ENCODE measurements at regions of chr2 and their contacts with region 1.

Region 1: DNA sequence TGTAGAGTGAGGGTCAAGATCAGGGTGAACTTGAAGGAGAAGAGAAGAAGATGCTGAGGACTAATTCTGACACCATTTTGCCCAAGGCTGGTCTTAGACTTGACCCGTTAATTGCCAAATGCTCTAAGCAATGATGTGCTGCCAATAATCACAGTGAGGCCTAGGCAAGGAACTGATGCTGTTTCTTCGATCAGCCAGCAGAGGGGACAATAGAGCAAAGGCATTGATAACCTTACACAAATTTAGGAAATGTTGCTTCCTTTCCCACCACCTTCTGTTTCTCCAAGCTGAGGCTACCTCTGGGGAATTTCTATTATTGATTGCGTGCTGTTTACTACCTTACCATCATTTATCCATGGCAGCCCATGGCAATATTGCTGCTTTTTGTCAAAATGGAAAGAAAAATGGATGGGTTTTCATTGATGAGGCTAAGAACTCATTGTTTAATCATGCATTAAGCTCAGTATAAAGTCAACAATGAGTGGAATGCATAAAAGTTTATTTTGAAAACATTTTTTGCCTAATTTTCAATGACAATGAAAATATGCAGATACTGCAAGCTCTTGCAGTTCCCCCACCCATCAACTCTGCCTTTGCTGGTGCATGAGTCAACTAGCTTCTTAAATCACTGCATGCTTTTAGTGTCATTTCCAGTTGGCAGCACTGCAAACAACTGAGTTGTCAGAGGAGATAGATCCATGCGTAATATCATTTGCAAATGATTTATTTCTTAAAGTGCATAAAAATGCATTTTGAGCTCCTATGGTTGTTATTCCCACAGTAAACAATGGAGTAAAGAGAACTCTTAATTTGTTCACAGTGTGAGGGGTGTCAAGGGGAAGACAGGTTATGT is 116.4 kb upstream of the NYAP2 start:
- DNase-seq: peak; percentile 28
- ATAC-seq: peak; percentile 68
- H3K4me3 Mint-ChIP-seq: no peak overlapping the region
- H3K27ac Mint-ChIP-seq: no peak overlapping the region
- H3K4me1 Mint-ChIP-seq: no peaks in the 10 kb centered on the region
- H3K27me3 Mint-ChIP-seq: no peaks in the 10 kb centered on the region
- CTCF ChIP-seq: peak; percentile 72

Region 2: GRCh38 chr2:225254363-225254762 is 28.7 kb before region 1 on chr2:
- CTCF ChIA-PET with region 1: interaction called, 11 read pairs
- POLR2A ChIA-PET with region 1: no interaction called
- intact Hi-C with region 1: no loop called
- DNase-seq: no peak
- ATAC-seq: no peak
- H3K4me3 Mint-ChIP-seq: no peak overlapping the region
- H3K27ac Mint-ChIP-seq: no peak overlapping the region
- H3K4me1 Mint-ChIP-seq: no peaks in the 10 kb centered on the region
- H3K27me3 Mint-ChIP-seq: peaks cover 3% of the 10 kb centered on the region
- CTCF ChIP-seq: no peak

Region 3: DNA sequence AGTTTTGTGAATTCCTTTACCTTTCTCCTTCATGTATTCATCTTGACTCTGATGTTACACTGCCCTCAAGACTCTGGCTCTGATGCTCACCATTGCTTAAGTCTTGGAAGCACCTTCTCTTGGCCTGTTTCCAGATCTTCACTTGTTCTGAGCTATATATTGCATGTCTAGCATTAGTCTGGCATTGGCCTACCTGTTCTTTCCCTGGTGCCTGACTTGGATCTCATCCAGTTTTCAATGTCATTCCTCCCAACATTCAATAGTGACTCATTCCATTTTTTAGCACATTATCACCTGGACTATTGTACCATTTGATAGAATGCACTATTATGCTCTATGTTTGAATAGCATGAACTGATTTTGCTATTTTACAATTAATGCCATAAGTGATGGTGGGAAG is 10.9 kb before region 1 on chr2:
- CTCF ChIA-PET with region 1: interaction called, 10 read pairs
- POLR2A ChIA-PET with region 1: no interaction called
- intact Hi-C with region 1: no loop called
- DNase-seq: no peak
- ATAC-seq: no peak
- H3K4me3 Mint-ChIP-seq: no peak overlapping the region
- H3K27ac Mint-ChIP-seq: no peak overlapping the region
- H3K4me1 Mint-ChIP-seq: no peaks in the 10 kb centered on the region
- H3K27me3 Mint-ChIP-seq: no peaks in the 10 kb centered on the region
- CTCF ChIP-seq: no peak

Region 4: GRCh38 chr2:225355788-225356187 is 72.7 kb after region 1 on chr2:
- CTCF ChIA-PET with region 1: no interaction called
- POLR2A ChIA-PET with region 1: no interaction called
- intact Hi-C with region 1: no loop called
- DNase-seq: no peak
- ATAC-seq: no peak
- H3K4me3 Mint-ChIP-seq: no peak overlapping the region
- H3K27ac Mint-ChIP-seq: no peak overlapping the region
- H3K4me1 Mint-ChIP-seq: no peaks in the 10 kb centered on the region
- H3K27me3 Mint-ChIP-seq: peaks cover 9% of the 10 kb centered on the region
- CTCF ChIP-seq: no peak

Region 5: GRCh38 chr2:225660262-225661131 is 377.4 kb after region 1 on chr2:
- CTCF ChIA-PET with region 1: interaction called, 76 read pairs
- POLR2A ChIA-PET with region 1: no interaction called
- intact Hi-C with region 1: loop called (anchors 2 kb)
- DNase-seq: peak; percentile 90
- ATAC-seq: peak; percentile 81
- H3K4me3 Mint-ChIP-seq: no peak overlapping the region
- H3K27ac Mint-ChIP-seq: no peak overlapping the region
- H3K4me1 Mint-ChIP-seq: no peaks in the 10 kb centered on the region
- H3K27me3 Mint-ChIP-seq: peaks cover 17% of the 10 kb centered on the region
- CTCF ChIP-seq: peak; percentile 74